ENCODE measurements at regions of chr2 and their contacts with region 1.

Region 1: GRCh38 chr2:121356058-121356640 is 71.1 kb upstream of the TFCP2L1 start:
- DNase-seq: peak in 2 of 10 donors; percentile 27 to 44

Region 2: DNA sequence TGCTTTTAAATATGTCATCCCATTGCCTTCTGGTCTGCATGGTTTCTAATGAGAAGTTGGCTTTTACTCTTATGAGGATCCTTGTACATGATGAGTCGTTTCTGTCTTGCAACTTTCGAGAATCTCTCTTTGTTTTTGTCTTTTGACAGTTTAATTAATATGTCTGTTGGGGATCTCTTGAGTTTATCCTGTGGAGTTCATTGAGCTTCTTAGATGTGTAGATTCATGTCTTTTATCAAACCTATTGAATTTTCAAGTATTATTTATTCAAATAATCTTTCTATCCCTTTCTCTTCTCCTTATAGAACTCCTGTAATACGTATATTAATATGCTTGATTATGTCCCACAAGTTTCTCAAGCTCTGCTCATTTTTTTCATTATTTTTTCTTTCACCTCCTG is 1200.8 kb before region 1 on chr2:
- intact Hi-C with region 1: no loop called
- DNase-seq: no peak

Region 3: DNA sequence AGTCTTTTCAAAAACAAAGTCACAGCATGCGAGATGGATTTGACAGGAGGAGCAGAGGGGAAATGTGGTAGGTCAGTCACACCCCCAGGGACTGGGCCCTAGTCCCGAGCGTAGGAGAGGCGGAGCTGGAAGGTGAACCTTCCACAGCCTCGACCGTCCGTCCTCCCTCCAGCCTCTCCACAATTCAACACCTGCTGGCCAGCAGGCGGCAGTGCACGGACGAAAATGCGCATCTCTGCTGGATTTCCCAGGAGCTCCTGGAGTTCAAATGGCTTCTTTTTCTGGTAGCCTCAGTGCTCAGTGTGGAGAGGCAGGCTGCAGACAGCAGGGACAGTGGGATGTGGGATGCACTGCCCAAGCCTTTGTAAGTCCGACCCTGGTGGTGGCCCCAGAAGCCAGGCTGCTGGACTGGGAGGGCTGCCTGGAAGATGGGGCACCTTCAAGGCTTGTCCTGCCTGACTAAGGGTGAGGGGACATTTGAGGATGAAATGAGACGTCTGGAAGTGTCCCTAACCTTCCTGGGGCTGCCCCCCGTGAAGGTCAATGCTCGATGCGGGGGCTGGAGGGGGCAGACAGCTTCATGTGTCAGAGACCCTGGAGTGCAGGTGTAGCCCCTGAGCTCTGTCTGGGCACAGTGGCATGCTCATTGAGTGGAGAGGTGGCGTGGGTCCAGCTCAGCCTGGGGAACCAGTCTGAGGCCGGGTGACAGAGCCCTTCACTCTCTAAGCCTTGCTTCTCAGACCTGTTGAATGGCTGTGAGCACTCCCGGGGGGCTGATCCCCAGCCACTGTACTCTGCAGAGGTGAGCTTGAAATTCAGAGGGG is 260.7 kb before region 1 on chr2:
- intact Hi-C with region 1: loop called (anchors 2 kb)
- DNase-seq: peak; percentile 50 to 95 (median 74)

Region 4: DNA sequence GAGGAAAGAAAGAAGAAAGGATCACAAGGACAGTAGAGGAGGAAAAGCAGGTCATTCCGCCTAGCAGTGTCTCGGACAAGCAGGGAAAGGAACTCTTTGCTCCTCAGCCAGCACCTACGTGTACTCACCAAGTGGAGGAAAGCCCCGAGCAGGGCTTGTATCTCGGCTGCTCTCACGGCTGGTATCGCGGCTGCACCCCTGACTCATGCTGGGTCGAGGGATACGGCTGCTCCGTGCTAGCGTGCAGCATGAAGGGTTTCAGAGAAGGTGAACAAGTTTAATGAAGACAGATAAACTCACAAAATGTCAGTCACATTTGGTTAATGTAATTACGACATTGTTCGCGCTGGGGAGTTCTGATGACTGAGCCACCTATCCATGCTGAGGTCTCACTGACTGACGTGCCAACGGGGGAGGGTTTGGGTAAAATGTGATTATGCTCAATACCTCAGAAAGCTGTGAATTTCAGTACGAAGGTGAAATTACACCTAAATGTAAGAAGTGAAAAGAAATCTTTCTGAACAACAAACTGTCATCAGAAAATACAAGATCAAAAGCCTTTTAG is 62.4 kb after region 1 on chr2:
- intact Hi-C with region 1: no loop called
- DNase-seq: no peak

Measured in posterior cingulate gyrus (tissue), 11 donors.